Cardiac septum (tissue), 1 donor: ENCODE measurements at regions of chr19 and their contacts with region 1.

Region 1: DNA sequence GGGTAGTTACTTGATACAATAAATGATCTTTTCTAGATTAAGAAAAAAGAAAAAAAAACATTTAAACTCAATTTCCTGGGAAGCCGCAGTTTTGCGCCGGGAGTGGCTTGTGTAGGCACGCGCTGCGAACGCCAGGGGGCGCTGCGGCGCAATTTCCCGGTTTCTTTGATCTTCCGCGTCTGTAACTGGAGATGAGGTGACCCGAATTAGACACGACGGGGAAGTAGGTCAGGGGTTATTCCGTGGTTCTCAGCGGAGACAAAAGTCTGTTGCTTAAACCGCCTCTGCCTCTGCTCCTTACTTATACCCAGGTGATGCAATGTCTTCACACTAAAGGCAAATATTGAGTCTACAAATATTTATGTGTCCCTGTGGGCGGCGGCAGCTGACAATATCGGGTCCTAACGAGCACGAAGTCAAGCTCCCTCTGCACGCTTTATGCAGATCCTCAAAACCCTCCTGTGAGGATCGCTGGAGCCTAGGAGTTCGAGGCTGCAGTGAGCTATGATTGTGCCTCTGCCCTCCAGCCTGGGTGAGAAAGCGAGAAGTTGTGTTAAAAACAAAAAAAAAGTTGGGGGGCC is 15.2 kb downstream of the STXBP2 start:
- DNase-seq: peak; percentile 95

Region 2: DNA sequence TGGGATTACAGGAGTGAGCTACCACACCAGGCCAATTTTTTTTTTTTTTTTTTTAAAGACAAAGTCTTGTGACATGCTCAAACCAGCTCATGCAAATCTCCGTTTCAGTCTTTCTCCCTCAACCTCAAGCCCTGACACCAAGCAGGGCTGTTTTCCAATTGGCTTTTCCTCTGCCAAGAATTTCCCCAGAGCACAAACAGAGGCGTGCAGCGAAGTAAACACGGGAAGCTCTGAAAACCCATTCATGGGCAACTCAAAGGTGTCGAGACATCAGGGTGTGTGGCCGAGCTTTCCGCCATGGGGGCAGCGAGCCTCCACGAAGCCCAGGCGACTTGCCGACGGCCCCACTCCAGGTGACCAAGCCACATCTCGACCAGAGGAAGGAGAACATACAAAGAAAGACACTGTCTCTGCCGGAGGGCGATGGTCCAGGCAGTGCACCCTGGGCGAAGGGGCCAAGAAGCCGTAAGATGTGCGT is 427.9 kb before region 1 on chr19:
- intact Hi-C with region 1: no loop called
- DNase-seq: no peak

Region 3: GRCh38 chr19:7680606-7681339 is 28.6 kb after region 1 on chr19 and contains the start of gene TRAPPC5:
- intact Hi-C with region 1: loop called (anchors 2 kb)
- DNase-seq: peak; percentile 94
- total RNA-seq, gene TRAPPC5: 77.0 TPM